ENCODE measurements at regions of chr1 and their contacts with region 1.

Region 1: DNA sequence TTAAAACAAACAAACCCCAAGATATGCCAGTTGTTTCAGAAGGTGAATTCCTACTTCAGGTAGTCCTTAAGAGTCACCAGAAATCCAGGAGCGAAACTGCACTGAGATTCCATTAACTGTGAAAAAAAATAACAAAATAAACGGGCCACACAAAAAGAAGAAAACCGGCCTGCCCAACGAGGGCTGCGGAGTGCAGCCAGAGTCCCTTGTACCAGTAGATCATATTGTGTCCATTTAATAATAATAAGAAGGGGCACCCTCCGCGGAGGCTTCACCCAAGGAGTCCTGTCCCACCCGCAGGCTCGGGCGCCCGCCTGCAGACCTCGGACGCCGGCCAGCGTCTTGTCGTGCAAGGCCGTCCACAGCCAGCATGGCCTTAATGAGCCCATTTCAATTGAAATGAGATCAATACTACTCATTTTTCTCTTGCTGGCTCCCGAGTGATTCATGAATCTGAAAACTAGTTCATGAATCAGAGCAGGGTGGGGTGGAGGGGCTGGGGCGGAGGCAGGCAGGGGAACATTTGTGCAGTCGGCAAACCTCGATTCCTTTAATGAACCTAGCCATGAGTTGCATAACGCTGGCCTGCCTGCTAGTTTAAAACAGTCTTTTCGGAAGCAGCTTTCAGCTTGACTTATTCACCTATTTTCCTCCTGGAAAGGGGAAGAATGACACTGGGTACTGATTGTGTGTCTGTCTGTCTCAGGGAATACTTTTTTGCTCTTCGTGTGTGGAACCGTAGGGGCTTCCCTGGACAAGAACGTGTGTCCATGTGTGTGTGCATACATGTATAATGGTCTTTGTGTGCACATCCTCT is 113.1 kb upstream of the IRF2BP2 start:
- DNase-seq: peak; percentile 26
- H3K4me3 Mint-ChIP-seq: peak overlapping the region; percentile 72
- H3K27ac Mint-ChIP-seq: peak overlapping the region; percentile 99
- H3K4me1 Mint-ChIP-seq: peaks cover 73% of the 10 kb centered on the region
- H3K27me3 Mint-ChIP-seq: no peaks in the 10 kb centered on the region

Region 2: DNA sequence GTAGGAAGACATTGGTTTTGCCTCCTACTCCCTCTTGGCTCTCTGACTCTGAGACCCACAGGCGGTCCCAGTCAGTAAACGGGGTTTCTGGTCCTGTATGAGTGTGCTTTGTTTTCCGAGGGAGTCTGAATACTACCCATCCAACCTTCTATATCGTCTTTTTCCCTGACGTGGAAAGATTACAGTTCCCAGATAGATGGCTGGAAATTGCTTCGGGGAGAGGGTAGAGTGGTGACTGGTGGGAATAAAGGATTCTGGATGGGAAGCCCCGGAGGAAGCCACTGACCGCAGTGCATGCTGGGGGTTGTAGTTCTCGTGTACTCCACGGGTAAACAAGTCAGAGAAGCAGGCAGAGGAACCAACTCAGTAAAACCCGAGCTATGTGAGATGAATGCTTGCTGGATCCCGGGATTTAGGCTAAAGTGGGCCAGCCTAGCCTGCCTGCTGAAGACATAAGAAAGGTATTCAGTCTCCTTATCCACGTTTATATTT is 47.0 kb before region 1 on chr1:
- intact Hi-C with region 1: loop called (anchors 5 kb)
- DNase-seq: no peak
- H3K4me3 Mint-ChIP-seq: peak overlapping the region; percentile 72
- H3K27ac Mint-ChIP-seq: peak overlapping the region; percentile 58
- H3K4me1 Mint-ChIP-seq: peaks cover 14% of the 10 kb centered on the region
- H3K27me3 Mint-ChIP-seq: no peaks in the 10 kb centered on the region

Region 3: DNA sequence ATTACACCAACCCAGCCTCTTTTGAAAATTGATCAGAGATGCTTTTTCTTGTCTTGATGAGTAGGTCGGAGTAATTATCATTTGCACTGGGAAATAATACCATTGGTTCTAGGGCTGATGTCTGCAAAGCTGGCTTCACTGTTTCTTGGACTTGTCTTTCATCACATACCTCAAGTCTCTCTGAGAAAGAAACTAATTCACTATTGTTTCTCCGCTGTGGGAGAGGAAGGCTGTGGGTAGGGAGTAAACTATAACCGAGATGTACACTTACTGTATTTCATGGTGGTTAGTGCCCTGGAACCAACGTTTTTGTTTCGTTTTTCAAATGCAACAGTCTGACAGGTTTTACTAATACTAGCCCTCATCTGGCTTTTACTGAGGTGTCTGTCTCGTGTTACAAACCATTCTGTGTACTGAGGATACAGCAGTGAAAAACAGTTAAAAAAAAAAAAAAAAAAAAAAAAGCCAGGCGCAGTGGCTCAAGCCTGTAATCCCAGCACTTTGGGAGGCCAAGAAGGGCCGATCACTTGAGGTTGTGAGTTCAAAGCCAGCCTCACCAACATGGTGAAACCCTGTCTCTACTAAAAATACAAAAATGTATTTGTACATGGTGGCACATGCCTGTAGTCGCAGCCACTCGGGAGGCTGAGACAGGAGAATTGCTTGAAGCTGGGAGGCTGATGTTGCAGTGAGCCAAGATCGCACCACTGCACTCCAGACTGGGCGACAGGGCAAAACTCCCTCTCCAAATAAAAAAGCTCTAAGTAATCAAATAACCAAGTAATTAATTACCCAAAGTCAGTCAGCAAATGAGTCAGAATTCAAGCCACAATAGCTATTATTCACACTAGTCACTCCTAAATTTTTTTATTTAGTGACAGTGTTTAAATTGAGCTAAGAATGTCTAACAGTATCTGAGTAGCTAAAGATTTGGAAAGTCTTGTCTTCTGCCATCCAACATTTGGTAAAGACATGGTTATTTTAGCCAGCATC is 382.2 kb after region 1 on chr1:
- intact Hi-C with region 1: no loop called
- DNase-seq: no peak
- H3K4me3 Mint-ChIP-seq: peak overlapping the region; percentile 38
- H3K27ac Mint-ChIP-seq: peak overlapping the region; percentile 85
- H3K4me1 Mint-ChIP-seq: peaks cover 28% of the 10 kb centered on the region
- H3K27me3 Mint-ChIP-seq: no peaks in the 10 kb centered on the region

Measured in activated T-helper 2 cell treated with anti-CD3 and anti-CD28 coated beads, Interferon-gamma antibody, Interleukin-2, Interleukin-4, amounts not matched to agents 10 μg/mL and 5 μg/mL and 100 μg/mL, durations not matched to agents 14 hours and 24 hours and 36 hours (primary cell).